Breast epithelium (tissue), 4 donors: ENCODE measurements at regions of chr10 and their contacts with region 1.

Region 1: GRCh38 chr10:49135575-49136313 is 1.9 kb upstream of the FAM170B start:
- DNase-seq: no peak
- H3K4me3 ChIP-seq: no peak overlapping the region
- H3K27ac ChIP-seq: peak overlapping the region; percentile 59 to 71
- H3K4me1 ChIP-seq: no peaks in the 10 kb centered on the region
- H3K27me3 ChIP-seq: no peaks in the 10 kb centered on the region
- CTCF ChIP-seq: no peak
- POLR2A ChIP-seq: no peak

Region 2: GRCh38 chr10:48406204-48406603 is 729.5 kb before region 1 on chr10:
- intact Hi-C with region 1: no loop called
- DNase-seq: no peak
- H3K4me3 ChIP-seq: no peak overlapping the region
- H3K27ac ChIP-seq: no peak overlapping the region
- H3K4me1 ChIP-seq: no peaks in the 10 kb centered on the region
- H3K27me3 ChIP-seq: no peaks in the 10 kb centered on the region
- CTCF ChIP-seq: no peak
- POLR2A ChIP-seq: no peak

Region 3: DNA sequence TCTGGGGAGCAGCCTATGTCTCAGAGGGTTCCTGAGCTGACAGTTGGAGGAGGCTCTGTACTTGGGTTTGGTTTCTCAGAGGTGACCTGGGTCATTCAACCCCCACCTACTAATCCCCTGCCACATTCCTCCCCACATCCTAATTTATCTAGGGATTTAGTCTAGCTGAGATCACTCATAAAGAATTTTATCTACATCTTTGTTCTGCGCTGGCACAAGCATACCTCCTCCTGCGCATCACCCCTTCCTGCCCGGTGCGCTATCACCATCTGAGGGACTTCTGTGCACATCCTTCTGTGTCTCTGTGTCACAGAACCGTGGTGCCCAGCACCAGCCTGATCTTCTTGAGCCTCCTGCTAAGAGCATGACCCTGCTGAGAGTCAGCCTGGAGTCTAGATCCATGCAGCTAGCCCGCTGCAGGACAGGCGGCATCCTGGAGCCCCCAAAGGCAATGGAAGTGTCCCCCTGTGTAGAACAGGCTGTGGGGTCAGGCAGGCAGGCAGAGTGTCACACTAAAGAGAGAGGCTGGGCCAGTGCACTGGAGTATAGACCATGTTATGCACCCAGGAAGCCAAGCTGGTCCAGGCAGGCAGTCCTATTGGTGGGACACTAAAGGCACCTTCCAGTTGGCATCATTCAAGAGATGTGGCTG is 594.5 kb before region 1 on chr10:
- intact Hi-C with region 1: no loop called
- DNase-seq: no peak
- H3K4me3 ChIP-seq: no peak overlapping the region
- H3K27ac ChIP-seq: no peak overlapping the region
- H3K4me1 ChIP-seq: no peaks in the 10 kb centered on the region
- H3K27me3 ChIP-seq: no peaks in the 10 kb centered on the region
- CTCF ChIP-seq: no peak
- POLR2A ChIP-seq: no peak

Region 4: DNA sequence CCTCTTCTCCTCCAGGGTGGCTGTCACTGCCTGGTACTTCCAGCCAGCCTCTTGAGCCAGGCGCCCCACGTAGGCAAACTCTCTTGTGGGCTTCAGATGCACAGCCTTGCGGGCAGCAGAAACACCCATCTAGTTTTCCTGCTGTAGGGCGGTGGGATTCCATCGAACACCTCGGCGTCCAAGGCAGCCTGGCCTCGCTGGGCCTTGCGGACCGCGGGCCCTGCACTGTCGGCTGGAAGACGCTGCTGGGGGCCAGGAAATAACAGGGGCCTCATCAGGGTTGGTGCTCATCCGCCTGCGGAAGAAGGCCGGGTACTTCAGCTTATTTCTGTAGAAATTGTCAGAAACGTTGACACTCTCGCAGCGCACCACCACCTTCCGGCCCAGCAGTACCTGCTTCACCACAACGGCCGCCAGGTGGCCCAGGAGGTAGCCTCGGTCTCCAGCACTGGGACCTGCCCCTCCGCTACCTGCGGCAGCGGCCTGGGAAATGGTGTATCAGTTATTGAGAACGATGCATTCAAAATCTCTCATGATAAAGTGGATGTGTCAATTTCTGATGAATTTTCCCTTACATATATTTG is 390.0 kb before region 1 on chr10:
- intact Hi-C with region 1: loop called (anchors 5 kb)
- DNase-seq: no peak
- H3K4me3 ChIP-seq: no peak overlapping the region
- H3K27ac ChIP-seq: no peak overlapping the region
- H3K4me1 ChIP-seq: no peaks in the 10 kb centered on the region
- H3K27me3 ChIP-seq: no peaks in the 10 kb centered on the region
- CTCF ChIP-seq: no peak
- POLR2A ChIP-seq: no peak

Region 5: DNA sequence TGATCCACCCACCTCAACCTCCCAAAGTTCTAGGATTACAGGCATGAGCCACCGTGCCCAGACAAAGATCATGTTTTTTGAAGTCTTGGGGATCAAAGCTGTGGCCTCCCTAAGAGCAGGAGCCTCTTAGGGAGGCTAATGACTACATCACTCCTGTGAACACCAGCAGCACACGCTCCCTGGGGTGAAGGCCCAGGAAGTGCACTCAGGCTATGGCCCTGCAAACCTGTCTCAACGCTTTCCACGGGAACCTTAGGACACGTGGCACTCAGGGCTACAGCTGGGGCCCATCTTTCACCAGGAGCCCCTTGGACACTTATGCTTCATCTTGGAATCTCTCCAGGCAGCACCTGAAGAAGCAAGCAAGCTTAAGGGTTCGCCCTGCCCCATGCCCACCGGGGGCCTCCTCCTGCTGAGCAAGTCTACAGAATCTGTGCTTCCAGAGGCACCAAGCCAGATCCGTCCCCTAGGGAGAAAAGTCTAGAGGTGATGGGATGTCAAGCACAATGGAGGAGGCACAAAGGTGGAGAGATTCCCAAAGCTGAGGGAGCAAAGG is 38.8 kb before region 1 on chr10:
- intact Hi-C with region 1: loop called (anchors 1 kb)
- DNase-seq: no peak
- H3K4me3 ChIP-seq: no peak overlapping the region
- H3K27ac ChIP-seq: no peak overlapping the region
- H3K4me1 ChIP-seq: no peaks in the 10 kb centered on the region
- H3K27me3 ChIP-seq: no peaks in the 10 kb centered on the region
- CTCF ChIP-seq: no peak
- POLR2A ChIP-seq: no peak